ENCODE measurements at regions of chrX and their contacts with region 1.

Region 1: DNA sequence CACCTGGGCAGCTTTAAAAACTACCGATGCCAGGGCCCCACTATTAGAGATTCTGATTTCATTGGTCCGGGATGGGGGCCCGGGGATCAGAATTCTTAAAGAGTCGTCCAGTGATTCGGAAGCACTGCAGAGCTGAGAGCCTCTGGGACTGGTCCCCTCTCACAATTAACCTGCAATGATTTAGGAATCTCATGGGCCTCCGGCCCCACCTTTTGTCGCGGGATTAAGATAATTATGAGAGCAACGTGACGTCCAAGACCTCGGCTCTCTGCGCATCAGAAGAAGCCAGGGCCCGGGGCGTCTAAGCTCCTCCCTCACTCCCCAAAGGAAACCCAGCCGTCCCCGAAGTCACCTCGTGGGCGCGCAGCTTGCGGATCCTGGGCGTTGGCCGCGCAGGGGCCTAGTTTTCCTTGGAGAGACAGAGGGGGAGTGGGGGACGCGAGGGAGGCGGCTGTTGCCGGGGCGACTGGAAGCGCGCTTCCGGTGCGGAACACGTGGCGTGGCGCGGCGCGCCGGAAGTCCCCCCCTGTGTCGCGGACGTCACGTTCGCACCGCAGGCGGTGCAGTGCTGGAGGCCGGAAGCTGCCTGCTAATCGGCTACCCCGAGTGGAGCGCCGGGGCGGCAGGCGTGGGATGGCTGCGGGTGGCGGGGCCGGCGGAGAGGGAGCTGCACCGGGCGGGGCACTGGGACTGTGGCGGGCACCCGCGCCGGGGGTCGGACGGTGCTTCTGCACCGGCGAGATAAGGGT is at the start of gene GEMIN8:
- DNase-seq: peak; percentile 81 to 84
- H3K4me3 ChIP-seq: peak within 1 kb of the TSS; percentile 70
- H3K27ac ChIP-seq: peak within 1 kb of the TSS; percentile 77
- H3K4me1 ChIP-seq: peaks cover 30% of the 10 kb centered on the region
- H3K27me3 ChIP-seq: no peaks in the 10 kb centered on the region
- CTCF ChIP-seq: no peak
- total RNA-seq, gene GEMIN8: 17.1 and 18.8 TPM in 2 replicates

Region 2: DNA sequence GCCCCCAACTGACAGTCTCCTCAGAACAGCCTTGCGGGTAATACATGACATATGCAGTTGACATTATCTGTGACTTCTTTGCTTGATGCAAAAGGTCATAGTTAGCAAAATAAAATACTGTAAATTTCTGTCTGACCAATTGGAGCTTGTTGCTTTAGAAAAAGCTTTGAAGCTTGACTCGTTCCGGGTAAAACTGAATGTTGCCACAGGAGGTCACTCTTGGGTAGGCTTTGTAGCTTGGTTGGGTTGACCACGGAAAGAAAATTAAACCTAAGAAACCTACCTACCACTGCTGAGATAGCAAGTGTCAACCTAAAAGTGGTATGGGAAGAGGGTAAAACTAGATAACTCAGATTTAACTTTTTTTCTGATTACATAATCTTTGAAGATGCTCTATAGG is 1215.2 kb before region 1 on chrX:
- CTCF ChIA-PET with region 1: no interaction called
- POLR2A ChIA-PET with region 1: no interaction called
- intact Hi-C with region 1: loop called (anchors 5 kb)
- DNase-seq: peak; percentile 44 to 51
- H3K4me3 ChIP-seq: no peak overlapping the region
- H3K27ac ChIP-seq: no peak overlapping the region
- H3K4me1 ChIP-seq: no peaks in the 10 kb centered on the region
- H3K27me3 ChIP-seq: no peaks in the 10 kb centered on the region
- CTCF ChIP-seq: peak; percentile 75

Region 3: DNA sequence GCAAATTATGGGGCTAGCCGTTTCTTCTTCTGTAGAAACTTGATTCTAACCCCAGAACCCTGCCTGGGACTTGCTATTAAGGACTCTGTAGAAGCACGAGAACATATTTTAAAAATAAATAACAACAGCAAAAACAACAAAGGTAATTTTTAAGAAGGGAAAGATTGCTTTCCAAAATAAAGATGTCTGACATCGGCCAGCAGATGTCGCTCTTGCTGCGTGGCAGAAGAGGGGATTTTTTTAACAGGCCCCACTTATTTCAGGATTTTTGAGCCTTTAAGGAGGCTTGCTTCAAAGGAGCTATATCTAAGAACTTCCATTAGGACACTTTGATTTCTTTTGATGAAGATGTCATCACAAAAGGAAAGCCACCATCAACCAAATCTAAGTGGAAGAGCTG is 523.0 kb before region 1 on chrX:
- CTCF ChIA-PET with region 1: interaction called, 5 read pairs
- POLR2A ChIA-PET with region 1: no interaction called
- intact Hi-C with region 1: loop called (anchors 1 kb)
- DNase-seq: peak in 1 of 2 experiments; percentile 20
- H3K4me3 ChIP-seq: no peak overlapping the region
- H3K27ac ChIP-seq: no peak overlapping the region
- H3K4me1 ChIP-seq: no peaks in the 10 kb centered on the region
- H3K27me3 ChIP-seq: no peaks in the 10 kb centered on the region
- CTCF ChIP-seq: peak; percentile 85

Region 4: DNA sequence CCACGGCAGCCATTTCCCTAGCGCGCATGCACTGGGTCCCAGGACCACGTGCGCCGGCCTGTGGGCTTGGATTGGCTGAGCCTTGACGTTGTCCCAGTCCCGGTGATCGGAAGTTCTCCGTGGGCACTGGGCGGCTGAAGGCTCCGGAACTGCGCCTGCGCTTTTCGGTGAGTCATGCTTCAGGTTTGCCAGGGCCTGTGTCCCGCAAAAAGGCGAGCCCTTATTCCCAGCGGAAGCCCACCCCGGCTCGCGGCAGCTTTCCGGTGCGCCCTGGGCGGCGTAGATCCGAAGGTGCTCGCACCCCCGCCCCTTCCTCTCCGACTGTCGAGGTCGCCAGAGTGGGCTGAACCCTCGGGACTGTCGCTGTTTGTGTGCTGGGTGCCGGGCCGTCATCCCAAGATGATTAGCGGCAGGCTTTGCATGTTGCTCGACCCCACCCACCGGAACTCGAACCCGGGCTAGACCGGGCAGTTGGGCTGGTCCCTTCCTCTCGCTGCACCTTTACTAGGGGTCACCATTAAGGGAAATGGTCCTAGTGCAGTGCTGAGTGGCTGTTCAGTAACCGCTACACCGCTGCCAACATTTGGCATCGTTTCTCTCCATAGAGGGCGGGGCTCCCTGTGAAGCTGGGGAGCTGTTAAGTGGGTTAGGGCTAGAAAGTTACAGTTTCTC is 376.4 kb before region 1 on chrX and contains the start of gene TCEANC:
- CTCF ChIA-PET with region 1: no interaction called
- POLR2A ChIA-PET with region 1: no interaction called
- intact Hi-C with region 1: loop called (anchors 2 kb)
- DNase-seq: peak; percentile 94 to 95
- H3K4me3 ChIP-seq: peak within 1 kb of the TSS; percentile 86
- H3K27ac ChIP-seq: peak within 1 kb of the TSS; percentile 97
- H3K4me1 ChIP-seq: peaks cover 19% of the 10 kb centered on the region
- H3K27me3 ChIP-seq: no peaks in the 10 kb centered on the region
- CTCF ChIP-seq: no peak
- total RNA-seq, gene TCEANC: 0.96 and 1.2 TPM in 2 replicates

Region 5: DNA sequence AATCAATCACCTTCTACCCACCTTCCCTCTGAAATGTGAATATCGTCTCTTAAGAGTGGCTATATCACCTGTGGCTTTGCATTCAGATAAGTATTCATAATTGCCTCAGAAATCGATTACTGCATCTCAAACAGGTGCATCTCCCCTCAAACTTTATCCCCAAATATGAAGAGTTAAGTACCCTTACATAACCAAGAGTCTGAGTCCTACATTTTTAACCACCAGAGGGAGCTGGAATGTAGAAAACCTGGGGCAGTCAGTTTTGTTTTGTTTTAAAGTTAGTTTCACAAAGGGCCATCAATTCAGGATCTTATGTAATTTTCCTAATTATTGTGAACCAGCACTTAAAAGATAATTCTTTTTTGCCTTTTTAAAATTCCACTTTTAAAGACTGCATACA is 371.0 kb before region 1 on chrX:
- CTCF ChIA-PET with region 1: no interaction called
- POLR2A ChIA-PET with region 1: no interaction called
- intact Hi-C with region 1: loop called (anchors 2 kb)
- DNase-seq: peak in 1 of 2 experiments; percentile 52
- H3K4me3 ChIP-seq: peak overlapping the region; percentile 42; the same call in 1 of the 2 replicates
- H3K27ac ChIP-seq: peak overlapping the region; percentile 91
- H3K4me1 ChIP-seq: peaks cover 24% of the 10 kb centered on the region
- H3K27me3 ChIP-seq: no peaks in the 10 kb centered on the region
- CTCF ChIP-seq: peak; percentile 84

Region 6: DNA sequence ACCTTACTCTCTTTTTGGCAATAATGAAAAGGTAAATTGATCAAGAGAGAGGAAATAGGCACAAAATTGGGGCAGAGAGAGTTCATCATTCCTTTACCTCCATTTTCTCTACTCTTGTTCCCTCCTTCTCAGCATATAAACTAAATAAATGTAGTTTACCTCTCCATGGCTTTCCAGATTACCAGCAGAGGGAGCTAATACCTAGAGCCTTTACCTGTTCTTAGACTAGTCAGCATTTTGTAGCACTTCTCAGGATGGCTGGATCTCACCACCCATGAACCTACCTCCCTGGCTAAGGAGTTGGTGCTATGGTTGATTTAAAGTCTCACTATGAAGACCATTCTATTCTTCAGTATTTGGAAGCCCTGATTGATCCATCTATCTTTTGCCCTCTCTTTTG is 279.4 kb before region 1 on chrX:
- CTCF ChIA-PET with region 1: no interaction called
- POLR2A ChIA-PET with region 1: no interaction called
- intact Hi-C with region 1: loop called (anchors 1 kb)
- DNase-seq: peak in 1 of 2 experiments; percentile 44
- H3K4me3 ChIP-seq: no peak overlapping the region
- H3K27ac ChIP-seq: no peak overlapping the region
- H3K4me1 ChIP-seq: no peaks in the 10 kb centered on the region
- H3K27me3 ChIP-seq: no peaks in the 10 kb centered on the region
- CTCF ChIP-seq: peak; percentile 68

Region 7: DNA sequence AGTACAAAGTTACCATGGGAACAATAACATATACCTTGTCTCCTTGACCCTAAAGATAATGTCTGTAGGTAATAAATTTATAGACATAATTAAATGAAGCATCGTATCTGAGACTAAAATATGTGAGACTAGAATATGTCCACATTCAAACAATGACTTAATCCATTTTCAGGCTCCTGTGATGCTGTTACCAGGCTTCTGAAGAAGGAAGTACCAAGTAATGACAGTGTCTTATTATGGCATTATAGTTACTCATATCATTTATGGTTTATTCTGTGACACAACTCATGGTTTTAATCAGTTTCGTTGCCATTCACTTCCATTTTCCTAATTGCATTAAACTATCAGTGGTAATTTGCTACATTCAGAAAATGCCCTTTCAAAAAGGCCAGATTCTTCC is 112.1 kb before region 1 on chrX:
- CTCF ChIA-PET with region 1: no interaction called
- POLR2A ChIA-PET with region 1: no interaction called
- intact Hi-C with region 1: no loop called
- DNase-seq: no peak
- H3K4me3 ChIP-seq: no peak overlapping the region
- H3K27ac ChIP-seq: no peak overlapping the region
- H3K4me1 ChIP-seq: no peaks in the 10 kb centered on the region
- H3K27me3 ChIP-seq: no peaks in the 10 kb centered on the region
- CTCF ChIP-seq: no peak

Region 8: GRCh38 chrX:14056206-14056605 is 26.6 kb after region 1 on chrX:
- CTCF ChIA-PET with region 1: no interaction called
- POLR2A ChIA-PET with region 1: no interaction called
- intact Hi-C with region 1: no loop called
- DNase-seq: no peak
- H3K4me3 ChIP-seq: no peak overlapping the region
- H3K27ac ChIP-seq: no peak overlapping the region
- H3K4me1 ChIP-seq: no peaks in the 10 kb centered on the region
- H3K27me3 ChIP-seq: no peaks in the 10 kb centered on the region
- CTCF ChIP-seq: no peak